Tibial artery (tissue), 4 donors: ENCODE measurements at regions of chr2 and their contacts with region 1.

Region 1: DNA sequence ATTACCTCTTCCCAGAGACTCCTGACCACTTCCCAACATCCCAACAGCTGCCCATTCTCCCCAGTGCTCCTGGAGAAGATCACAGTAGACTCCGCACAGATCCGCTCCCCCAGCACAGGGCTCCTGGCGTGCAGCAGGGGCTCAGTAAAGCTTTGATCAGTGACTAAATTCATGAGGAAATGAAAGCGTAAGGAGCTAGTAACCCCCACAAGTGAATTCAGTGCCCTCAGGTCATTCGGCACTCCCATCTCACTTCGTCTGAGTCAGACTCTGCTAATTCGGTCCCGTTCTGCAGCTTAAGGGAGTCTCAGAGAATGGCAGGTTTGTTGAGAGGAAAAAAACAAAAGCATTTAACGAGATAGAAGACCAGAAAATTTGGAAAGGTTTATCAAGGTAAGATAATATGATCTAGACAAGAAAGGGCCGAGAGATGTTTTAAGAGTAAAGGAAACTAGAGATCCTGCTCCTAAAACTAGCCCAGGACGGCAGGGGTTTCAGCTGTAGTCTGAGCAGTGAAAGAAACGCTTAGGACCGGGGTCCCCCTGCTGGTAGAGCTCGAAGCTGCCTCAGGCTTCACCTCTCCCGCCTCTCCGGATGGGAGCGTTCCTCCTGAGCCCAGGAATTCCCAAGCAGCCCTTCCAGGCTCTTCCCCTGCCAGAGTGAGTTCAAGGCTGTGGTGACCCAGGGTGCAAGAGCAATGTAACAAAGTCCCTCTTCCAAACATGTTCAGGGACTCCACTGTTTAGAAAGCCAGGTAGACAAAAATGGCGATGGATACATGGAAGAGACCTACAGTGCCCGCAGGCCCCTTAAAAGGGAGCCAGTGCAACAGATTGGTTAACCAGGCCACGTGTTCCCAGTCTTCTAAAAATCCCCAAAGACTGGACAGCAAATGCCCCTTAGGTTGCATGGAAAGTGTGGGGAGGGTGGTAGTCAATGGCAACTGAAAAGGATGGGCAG is 127.3 kb downstream of the DNER start:
- DNase-seq: peak; percentile 75 to 87
- H3K4me3 ChIP-seq: peak overlapping the region; percentile 11 to 13
- H3K27ac ChIP-seq: no peak overlapping the region
- H3K4me1 ChIP-seq: peaks cover 0 to 4% (median 0%) of the 10 kb centered on the region in 4 donors
- H3K27me3 ChIP-seq: peaks cover 0 to 3% of the 10 kb centered on the region in 2 donors
- CTCF ChIP-seq: peak; percentile 79 to 87

Region 2: DNA sequence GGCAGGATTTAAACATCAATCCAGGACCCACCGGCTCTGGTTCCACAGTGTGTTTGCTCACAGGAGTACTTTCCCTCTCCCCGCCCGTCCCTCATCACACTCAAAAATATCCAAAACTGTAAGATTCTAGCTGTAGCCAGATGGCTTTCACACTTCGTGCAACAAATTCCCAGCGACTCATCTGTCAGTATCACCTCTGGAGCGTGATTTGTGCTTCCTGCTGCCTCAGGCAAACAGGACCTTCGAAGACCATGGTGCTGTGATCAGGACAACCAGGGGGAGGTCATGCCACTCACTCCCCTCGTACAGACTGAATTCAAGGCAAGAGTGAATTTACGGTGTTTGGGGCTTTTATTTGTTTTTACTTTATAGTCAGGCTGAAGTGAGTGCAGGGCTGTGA is 161.4 kb before region 1 on chr2:
- intact Hi-C with region 1: loop called (anchors 5 kb)
- DNase-seq: no peak
- H3K4me3 ChIP-seq: no peak overlapping the region
- H3K27ac ChIP-seq: no peak overlapping the region
- H3K4me1 ChIP-seq: no peaks in the 10 kb centered on the region
- H3K27me3 ChIP-seq: no peaks in the 10 kb centered on the region
- CTCF ChIP-seq: no peak